Activated naive CD4-positive, alpha-beta T cell treated with anti-CD3 and anti-CD28 coated beads for 36 hours (primary cell): ENCODE measurements at regions of chr17 and their contacts with region 1.

Region 1: GRCh38 chr17:18314731-18315561 is at the starts of genes SMCR8 and TOP3A:
- DNase-seq: peak; percentile 98
- H3K4me3 Mint-ChIP-seq: peak within 1 kb of the TSS; percentile 92
- H3K27ac Mint-ChIP-seq: peak within 1 kb of the TSS; percentile 99
- H3K4me1 Mint-ChIP-seq: peaks cover 75% of the 10 kb centered on the region
- H3K27me3 Mint-ChIP-seq: no peaks in the 10 kb centered on the region
- total RNA-seq, gene SMCR8: 8.5 to 8.8 TPM
- total RNA-seq, gene TOP3A: 59.0 to 59.5 TPM

Region 2: DNA sequence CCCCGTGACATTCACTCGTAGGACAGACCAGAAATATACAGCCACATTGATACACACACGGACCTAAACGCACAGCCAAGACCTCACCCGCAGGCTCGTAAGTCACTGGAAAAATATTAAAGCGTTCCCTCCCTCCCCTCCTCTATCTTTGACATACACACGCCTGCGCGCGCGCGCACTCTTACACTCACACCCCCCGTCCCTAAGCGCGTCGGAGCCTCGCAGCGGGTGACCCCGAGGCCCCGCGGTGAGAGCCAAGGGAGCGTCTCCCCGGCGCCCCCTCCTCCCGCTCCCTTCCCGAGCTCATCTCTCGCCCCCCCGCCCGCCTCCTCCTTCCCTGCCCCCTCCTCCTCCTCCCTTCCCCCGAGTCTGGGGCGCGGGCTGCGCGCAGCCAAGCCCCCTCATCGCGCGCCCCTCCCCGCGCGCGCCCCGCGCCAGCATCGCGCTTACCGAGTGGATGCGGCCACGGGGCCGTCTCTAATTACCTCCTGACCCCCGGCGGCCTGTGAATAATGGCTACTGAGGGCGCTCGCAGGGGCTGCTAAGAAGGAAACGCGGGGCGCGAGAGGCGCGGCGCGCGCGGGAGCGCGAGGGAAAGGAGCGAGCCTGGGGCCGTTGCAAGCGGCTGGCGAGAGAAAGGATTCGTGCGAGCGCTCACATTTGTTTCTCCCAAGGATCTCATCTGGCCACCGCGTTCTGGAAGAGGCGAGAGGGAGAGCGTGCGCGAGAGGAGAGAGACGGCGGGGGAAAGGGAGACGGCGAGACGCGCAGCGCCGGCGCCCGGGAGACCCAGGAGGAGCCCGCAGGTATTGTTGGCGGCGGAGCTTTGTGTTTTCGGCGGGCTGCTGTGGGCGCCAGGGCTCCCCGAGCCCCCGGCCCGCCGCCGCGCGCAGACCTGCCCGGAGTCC is 591.3 kb before region 1 on chr17:
- CTCF ChIA-PET with region 1: no interaction called
- intact Hi-C with region 1: no loop called
- DNase-seq: peak; percentile 22
- H3K4me3 Mint-ChIP-seq: peak overlapping the region; percentile 80
- H3K27ac Mint-ChIP-seq: no peak overlapping the region
- H3K4me1 Mint-ChIP-seq: peaks cover 37% of the 10 kb centered on the region
- H3K27me3 Mint-ChIP-seq: peaks cover 24% of the 10 kb centered on the region

Region 3: DNA sequence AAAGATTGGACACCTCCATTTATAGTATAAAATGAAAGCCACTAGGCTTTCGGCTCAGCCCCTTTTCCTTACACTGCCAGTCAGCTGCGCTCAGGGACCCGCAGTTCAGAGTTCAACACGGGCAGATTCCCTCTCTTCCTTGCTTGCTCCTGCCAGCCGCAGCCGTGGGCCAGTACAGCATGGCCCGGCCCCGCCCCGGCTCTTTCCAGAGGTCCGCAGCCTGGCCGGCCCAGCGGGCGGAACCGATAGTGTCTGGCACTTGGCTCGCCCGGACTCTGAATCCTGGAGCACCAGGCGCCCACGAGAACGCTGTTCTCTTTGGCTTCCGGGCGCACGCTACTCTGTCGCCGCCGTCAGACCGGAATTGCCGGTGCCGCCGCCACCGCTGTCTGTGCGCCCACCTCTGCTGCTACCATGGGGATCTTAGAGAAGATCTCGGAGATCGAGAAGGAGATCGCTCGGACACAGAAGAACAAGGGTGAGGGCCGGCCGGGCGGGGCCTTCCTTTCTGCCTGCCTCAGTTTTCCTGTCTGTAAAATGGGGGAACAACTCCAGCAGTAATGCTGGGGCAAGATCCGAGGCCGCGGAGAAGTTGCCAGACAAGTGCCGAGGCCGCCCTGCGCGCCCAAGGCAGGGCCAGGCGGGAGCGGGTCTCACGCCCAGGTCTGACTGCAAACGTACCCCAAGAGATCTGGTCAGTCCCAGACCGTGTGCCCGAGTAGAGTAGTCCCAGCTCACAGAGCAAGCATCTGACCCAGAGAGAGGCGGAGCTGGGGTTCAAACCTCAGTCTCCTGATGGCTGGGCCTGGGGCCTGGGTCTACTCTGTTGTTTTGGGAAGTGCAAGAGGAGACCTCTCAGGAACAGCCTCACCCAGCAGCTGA is 227.1 kb before region 1 on chr17 and contains the start of gene DRG2:
- CTCF ChIA-PET with region 1: no interaction called
- intact Hi-C with region 1: loop called (anchors 1 kb)
- DNase-seq: peak; percentile 92
- H3K4me3 Mint-ChIP-seq: peak within 1 kb of the TSS; percentile 97
- H3K27ac Mint-ChIP-seq: peak within 1 kb of the TSS; percentile 93
- H3K4me1 Mint-ChIP-seq: peaks cover 29% of the 10 kb centered on the region
- H3K27me3 Mint-ChIP-seq: no peaks in the 10 kb centered on the region
- total RNA-seq, gene DRG2: 38.4 to 38.7 TPM

Region 4: GRCh38 chr17:18225121-18225566 is 89.8 kb before region 1 on chr17:
- CTCF ChIA-PET with region 1: no interaction called
- intact Hi-C with region 1: loop called (anchors 1 kb)
- DNase-seq: peak; percentile 97
- H3K4me3 Mint-ChIP-seq: peak overlapping the region; percentile 70
- H3K27ac Mint-ChIP-seq: no peak overlapping the region
- H3K4me1 Mint-ChIP-seq: peaks cover 24% of the 10 kb centered on the region
- H3K27me3 Mint-ChIP-seq: no peaks in the 10 kb centered on the region

Region 5: DNA sequence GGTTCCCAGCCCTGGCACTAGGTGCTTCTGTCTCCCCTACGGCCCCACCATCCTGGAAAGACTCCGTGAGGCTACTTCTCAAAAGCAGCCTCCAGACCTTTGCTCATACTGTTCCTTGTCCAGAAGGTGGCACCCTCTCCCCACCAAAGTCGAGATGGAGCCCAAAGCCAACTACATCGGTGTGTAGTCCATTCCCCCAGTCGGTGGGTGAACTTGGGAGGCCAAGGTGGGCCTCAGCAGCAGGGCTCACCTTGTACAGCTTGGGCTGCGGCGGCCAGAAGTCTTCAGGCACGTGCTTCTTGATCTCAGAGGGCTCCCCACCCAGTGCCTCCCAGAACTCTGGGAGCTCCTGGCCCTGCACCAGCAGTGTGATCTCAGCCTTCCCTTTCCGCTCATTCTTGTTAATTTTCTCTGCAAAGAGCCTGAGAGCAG is 66.6 kb before region 1 on chr17:
- CTCF ChIA-PET with region 1: interaction called, 3 read pairs
- intact Hi-C with region 1: loop called (anchors 2 kb)
- DNase-seq: peak; percentile 83
- H3K4me3 Mint-ChIP-seq: no peak overlapping the region
- H3K27ac Mint-ChIP-seq: peak overlapping the region; percentile 28
- H3K4me1 Mint-ChIP-seq: no peaks in the 10 kb centered on the region
- H3K27me3 Mint-ChIP-seq: no peaks in the 10 kb centered on the region

Region 6: DNA sequence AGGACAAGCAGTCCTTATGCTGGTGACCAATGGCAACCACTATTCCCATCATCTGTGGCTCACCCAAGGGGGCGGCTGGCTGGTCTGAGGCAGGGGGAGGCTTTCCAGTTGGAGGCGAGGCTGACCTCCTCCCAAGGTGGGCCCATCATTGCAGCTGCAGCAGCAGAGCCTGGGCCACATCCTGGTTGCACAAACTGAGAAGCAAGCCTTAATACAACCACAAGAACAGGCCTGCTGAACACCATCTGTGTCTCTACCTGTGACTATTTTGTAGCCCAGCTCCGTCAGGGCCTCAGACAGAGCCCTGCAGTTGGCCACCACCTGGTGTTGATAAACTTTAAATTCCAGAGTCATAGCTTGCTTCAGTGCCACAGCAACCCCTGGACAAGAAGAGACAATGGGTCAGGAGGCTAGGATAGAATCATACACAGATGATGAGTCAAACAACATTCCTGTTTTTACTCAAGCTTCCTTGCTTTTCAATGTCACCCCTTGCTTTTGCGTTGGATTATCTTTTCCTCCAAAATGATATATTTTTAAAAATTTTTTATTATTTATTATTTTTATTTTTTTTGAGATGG is 18.1 kb after region 1 on chr17:
- CTCF ChIA-PET with region 1: no interaction called
- intact Hi-C with region 1: no loop called
- DNase-seq: no peak
- H3K4me3 Mint-ChIP-seq: no peak overlapping the region
- H3K27ac Mint-ChIP-seq: no peak overlapping the region
- H3K4me1 Mint-ChIP-seq: no peaks in the 10 kb centered on the region
- H3K27me3 Mint-ChIP-seq: no peaks in the 10 kb centered on the region

Region 7: GRCh38 chr17:18363101-18364049 is 48.4 kb after region 1 on chr17 and contains the start of gene SHMT1:
- CTCF ChIA-PET with region 1: no interaction called
- intact Hi-C with region 1: loop called (anchors 1 kb)
- DNase-seq: peak; percentile 94
- H3K4me3 Mint-ChIP-seq: peak within 1 kb of the TSS; percentile 89
- H3K27ac Mint-ChIP-seq: peak within 1 kb of the TSS; percentile 83
- H3K4me1 Mint-ChIP-seq: peaks cover 15% of the 10 kb centered on the region
- H3K27me3 Mint-ChIP-seq: peaks cover 1% of the 10 kb centered on the region
- total RNA-seq, gene SHMT1: 46.7 to 51.0 TPM